Activated naive CD4-positive, alpha-beta T cell treated with anti-CD3 and anti-CD28 coated beads, Interleukin-2, amount 10 ng/mL, durations not matched to agents 7 days and 5 days (primary cell): ENCODE measurements at regions of chr3 and their contacts with region 1.

Region 1: GRCh38 chr3:8987645-8988383 is 24.5 kb upstream of the RAD18 start:
- DNase-seq: peak; percentile 82
- H3K4me3 Mint-ChIP-seq: peak overlapping the region; percentile 28
- H3K27ac Mint-ChIP-seq: no peak overlapping the region
- H3K4me1 Mint-ChIP-seq: peaks cover 6% of the 10 kb centered on the region
- H3K27me3 Mint-ChIP-seq: no peaks in the 10 kb centered on the region

Region 2: GRCh38 chr3:8822141-8822540 is 165.7 kb before region 1 on chr3:
- CTCF ChIA-PET with region 1: no interaction called
- DNase-seq: no peak
- H3K4me3 Mint-ChIP-seq: no peak overlapping the region
- H3K27ac Mint-ChIP-seq: no peak overlapping the region
- H3K4me1 Mint-ChIP-seq: no peaks in the 10 kb centered on the region
- H3K27me3 Mint-ChIP-seq: no peaks in the 10 kb centered on the region

Region 3: GRCh38 chr3:8970971-8971589 is 16.7 kb before region 1 on chr3:
- CTCF ChIA-PET with region 1: interaction called, 51 read pairs
- DNase-seq: peak; percentile 82
- H3K4me3 Mint-ChIP-seq: no peak overlapping the region
- H3K27ac Mint-ChIP-seq: no peak overlapping the region
- H3K4me1 Mint-ChIP-seq: peaks cover 4% of the 10 kb centered on the region
- H3K27me3 Mint-ChIP-seq: peaks cover 34% of the 10 kb centered on the region

Region 4: GRCh38 chr3:9067352-9067975 is 79.7 kb after region 1 on chr3:
- CTCF ChIA-PET with region 1: interaction called, 20 read pairs
- DNase-seq: peak; percentile 55
- H3K4me3 Mint-ChIP-seq: no peak overlapping the region
- H3K27ac Mint-ChIP-seq: no peak overlapping the region
- H3K4me1 Mint-ChIP-seq: no peaks in the 10 kb centered on the region
- H3K27me3 Mint-ChIP-seq: no peaks in the 10 kb centered on the region

Region 5: DNA sequence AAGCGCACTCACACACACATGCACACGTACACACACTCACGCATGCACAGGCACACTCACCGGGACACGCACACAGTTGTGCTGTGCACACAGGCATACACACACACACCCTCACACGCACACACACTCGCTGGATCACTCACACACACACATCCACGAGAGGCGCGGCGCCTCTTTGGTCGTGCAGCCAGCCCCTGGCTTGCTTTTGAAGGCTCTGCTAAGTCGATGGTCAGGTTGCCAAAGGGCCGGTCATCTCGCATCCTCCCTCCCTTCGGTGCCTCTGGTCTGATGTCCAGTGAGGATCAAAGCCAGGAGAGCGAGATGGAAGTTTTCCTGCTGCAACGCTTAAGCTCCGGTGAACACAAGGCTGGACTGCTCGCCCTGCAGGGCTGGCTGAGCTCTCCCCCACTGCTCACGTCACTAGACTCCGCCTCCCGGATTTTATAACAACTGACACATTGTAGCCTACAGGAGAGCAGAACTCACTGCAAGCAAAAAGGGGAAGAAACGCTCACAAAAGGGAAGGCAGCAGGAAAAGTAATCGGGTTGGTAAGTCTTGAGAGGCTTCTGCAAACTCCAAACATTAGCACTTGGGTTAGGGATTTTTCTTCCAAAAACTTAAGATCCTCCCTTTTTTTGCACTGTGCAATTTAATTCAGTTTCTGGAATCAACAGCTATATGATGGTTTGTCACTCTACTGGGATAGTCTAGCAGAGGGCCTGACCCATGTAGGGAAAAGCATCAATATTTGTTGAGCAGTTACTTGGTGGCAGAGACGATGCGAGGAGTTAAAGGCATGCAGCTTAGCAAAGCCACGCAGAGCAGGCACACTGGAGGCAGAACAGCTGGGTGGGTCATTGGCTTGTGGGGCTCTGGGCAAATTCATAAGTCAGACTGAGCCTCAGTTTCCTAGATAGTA is 261.7 kb after region 1 on chr3 and contains the start of gene SRGAP3:
- CTCF ChIA-PET with region 1: interaction called, 21 read pairs
- DNase-seq: peak; percentile 89
- H3K4me3 Mint-ChIP-seq: peak within 1 kb of the TSS; percentile 83
- H3K27ac Mint-ChIP-seq: peak within 1 kb of the TSS; percentile 58
- H3K4me1 Mint-ChIP-seq: peaks cover 30% of the 10 kb centered on the region
- H3K27me3 Mint-ChIP-seq: peaks cover 30% of the 10 kb centered on the region

Region 6: DNA sequence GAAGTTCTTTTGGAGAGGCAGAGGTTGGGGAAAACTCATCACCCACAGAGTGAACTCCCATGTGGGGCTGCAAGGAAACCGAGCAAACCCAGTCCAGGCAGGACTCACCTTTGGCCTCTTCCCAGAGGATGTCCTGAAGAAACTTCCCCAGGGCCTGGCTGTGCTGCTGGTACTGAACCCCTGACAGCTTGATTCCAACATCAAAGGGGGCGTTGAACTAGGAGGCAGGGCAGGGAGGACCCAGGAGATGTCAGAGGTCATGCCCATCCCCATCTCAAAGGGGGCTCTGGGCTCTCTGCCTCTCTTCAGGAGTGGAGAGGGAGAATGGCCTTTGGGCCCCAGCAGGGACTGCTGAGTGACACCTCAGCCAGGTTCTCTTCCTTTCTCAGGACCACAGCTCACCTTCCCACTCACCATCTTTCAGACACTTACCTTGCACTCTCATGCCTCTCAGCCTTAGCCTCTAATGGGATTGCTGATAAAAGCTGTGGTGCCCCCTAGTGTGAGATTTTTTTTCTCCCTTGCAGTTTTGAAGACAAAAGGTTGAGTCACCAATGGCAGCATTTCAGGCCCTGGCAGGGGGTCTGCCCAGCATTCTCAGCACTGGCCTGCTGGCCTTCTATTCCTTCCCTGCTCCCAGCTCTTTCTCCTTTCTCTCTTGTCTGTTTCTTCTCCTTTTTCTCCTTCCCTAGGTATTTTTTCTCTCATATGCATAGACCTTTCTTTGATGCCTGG is 1298.9 kb after region 1 on chr3:
- CTCF ChIA-PET with region 1: no interaction called
- DNase-seq: peak; percentile 61
- H3K4me3 Mint-ChIP-seq: no peak overlapping the region
- H3K27ac Mint-ChIP-seq: no peak overlapping the region
- H3K4me1 Mint-ChIP-seq: peaks cover 32% of the 10 kb centered on the region
- H3K27me3 Mint-ChIP-seq: no peaks in the 10 kb centered on the region